ENCODE measurements at regions of chr17 and their contacts with region 1.

Region 1: DNA sequence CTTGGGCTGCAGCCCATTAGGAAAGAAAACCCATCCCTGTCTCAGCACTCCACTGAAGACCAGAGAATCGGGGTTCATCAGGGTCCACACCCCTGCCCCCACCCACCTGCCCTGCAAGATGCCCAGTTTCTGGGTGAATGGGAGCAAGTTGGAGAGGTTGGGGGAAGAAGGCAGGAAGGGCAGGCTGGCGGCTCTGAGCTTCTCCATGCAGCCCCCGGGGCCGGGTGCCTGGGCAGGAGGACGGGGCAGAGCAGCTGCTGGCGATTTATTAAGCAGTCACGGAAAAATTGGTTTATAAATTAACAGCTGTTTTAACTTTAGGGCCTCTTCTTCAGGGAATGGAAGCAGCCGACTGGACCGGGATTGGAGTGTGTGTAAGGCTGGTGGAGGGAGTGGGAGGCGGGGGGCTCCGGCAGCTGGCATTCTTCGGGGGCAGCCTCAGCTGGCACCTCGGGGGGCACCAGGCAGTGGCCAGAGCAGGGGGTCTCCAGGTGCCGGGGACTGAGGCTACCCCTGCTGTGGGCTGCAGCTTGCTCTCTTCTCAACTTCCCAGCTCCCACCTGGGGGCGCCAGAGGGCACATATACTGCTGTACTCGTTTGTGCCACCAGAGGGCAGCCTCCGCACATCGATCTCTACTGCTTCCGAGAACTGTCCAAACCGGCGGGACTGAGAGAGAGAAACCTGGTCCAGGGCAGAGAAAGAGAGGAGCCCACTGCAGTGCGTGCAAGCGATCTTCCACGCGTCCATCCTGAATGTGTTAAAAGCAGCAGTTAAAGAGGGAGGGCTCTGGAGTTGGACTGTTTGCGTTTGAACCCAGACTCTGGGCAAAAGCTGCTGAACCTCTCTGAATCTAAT is 5.0 kb upstream of the PPP1R1B start:
- DNase-seq: peak; percentile 91
- ATAC-seq: peak; percentile 73
- H3K4me3 Mint-ChIP-seq: peak overlapping the region; percentile 62
- H3K27ac Mint-ChIP-seq: peak overlapping the region; percentile 79
- H3K4me1 Mint-ChIP-seq: peaks cover 27% of the 10 kb centered on the region
- H3K27me3 Mint-ChIP-seq: peaks cover 39% of the 10 kb centered on the region

Region 2: DNA sequence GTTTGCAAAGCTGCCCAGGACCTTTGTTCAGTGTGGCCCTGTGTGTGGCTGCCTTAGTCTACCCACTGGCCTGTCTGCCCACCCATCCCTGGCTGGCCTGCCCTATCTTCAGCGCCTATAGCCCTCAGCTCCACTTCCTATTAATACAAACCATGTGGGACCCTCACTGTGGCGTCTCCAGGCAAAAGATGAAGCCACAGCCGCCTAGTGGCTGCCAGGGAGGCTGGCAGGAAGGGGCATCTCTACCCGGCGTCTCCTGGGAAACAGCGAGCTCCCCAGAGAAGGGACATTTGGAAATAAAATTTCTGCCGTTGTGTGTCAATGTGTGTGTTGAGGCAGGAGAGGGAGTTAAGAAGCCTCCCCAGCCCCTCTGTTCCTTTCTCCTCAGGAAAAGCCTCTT is 45.6 kb before region 1 on chr17:
- CTCF ChIA-PET with region 1: interaction called, 14 read pairs
- POLR2A ChIA-PET with region 1: no interaction called
- DNase-seq: no peak
- ATAC-seq: no peak
- H3K4me3 Mint-ChIP-seq: no peak overlapping the region
- H3K27ac Mint-ChIP-seq: no peak overlapping the region
- H3K4me1 Mint-ChIP-seq: peaks cover 4% of the 10 kb centered on the region
- H3K27me3 Mint-ChIP-seq: peaks cover 15% of the 10 kb centered on the region

Region 3: GRCh38 chr17:39653662-39654331 is 32.0 kb after region 1 on chr17:
- CTCF ChIA-PET with region 1: interaction called, 156 read pairs
- POLR2A ChIA-PET with region 1: interaction called, 3 read pairs
- DNase-seq: peak; percentile 88
- ATAC-seq: peak; percentile 85
- H3K4me3 Mint-ChIP-seq: no peak overlapping the region
- H3K27ac Mint-ChIP-seq: no peak overlapping the region
- H3K4me1 Mint-ChIP-seq: peaks cover 37% of the 10 kb centered on the region
- H3K27me3 Mint-ChIP-seq: no peaks in the 10 kb centered on the region

Region 4: GRCh38 chr17:39687811-39688518 is 66.2 kb after region 1 on chr17 and contains the start of gene PGAP3:
- CTCF ChIA-PET with region 1: interaction called, 12 read pairs
- POLR2A ChIA-PET with region 1: no interaction called
- DNase-seq: peak; percentile 89
- ATAC-seq: peak; percentile 93
- H3K4me3 Mint-ChIP-seq: peak within 1 kb of the TSS; percentile 98
- H3K27ac Mint-ChIP-seq: peak within 1 kb of the TSS; percentile 95
- H3K4me1 Mint-ChIP-seq: peaks cover 28% of the 10 kb centered on the region
- H3K27me3 Mint-ChIP-seq: no peaks in the 10 kb centered on the region
- total RNA-seq, gene PGAP3: 12.3 to 14.7 TPM

Region 5: GRCh38 chr17:39719563-39720355 is 98.0 kb after region 1 on chr17:
- CTCF ChIA-PET with region 1: interaction called, 11 read pairs
- POLR2A ChIA-PET with region 1: no interaction called
- DNase-seq: no peak
- ATAC-seq: no peak
- H3K4me3 Mint-ChIP-seq: no peak overlapping the region
- H3K27ac Mint-ChIP-seq: no peak overlapping the region
- H3K4me1 Mint-ChIP-seq: no peaks in the 10 kb centered on the region
- H3K27me3 Mint-ChIP-seq: no peaks in the 10 kb centered on the region

Region 6: GRCh38 chr17:39769974-39770587 is 148.3 kb after region 1 on chr17:
- CTCF ChIA-PET with region 1: interaction called, 12 read pairs
- POLR2A ChIA-PET with region 1: interaction called, 3 read pairs
- DNase-seq: peak; percentile 60
- ATAC-seq: peak; percentile 86
- H3K4me3 Mint-ChIP-seq: peak overlapping the region; percentile 17
- H3K27ac Mint-ChIP-seq: peak overlapping the region; percentile 82
- H3K4me1 Mint-ChIP-seq: peaks cover 92% of the 10 kb centered on the region
- H3K27me3 Mint-ChIP-seq: no peaks in the 10 kb centered on the region

Region 7: GRCh38 chr17:39980351-39981206 is 358.8 kb after region 1 on chr17 and contains the start of gene PSMD3:
- CTCF ChIA-PET with region 1: interaction called, 41 read pairs
- POLR2A ChIA-PET with region 1: no interaction called
- DNase-seq: peak; percentile 99
- ATAC-seq: peak; percentile 98
- H3K4me3 Mint-ChIP-seq: peak within 1 kb of the TSS; percentile 92
- H3K27ac Mint-ChIP-seq: peak within 1 kb of the TSS; percentile 92
- H3K4me1 Mint-ChIP-seq: peaks cover 31% of the 10 kb centered on the region
- H3K27me3 Mint-ChIP-seq: peaks cover 10% of the 10 kb centered on the region
- total RNA-seq, gene PSMD3: 104 to 116 TPM